Adrenal gland (tissue), 19 donors: ENCODE measurements at regions of chr10 and their contacts with region 1.

Region 1: DNA sequence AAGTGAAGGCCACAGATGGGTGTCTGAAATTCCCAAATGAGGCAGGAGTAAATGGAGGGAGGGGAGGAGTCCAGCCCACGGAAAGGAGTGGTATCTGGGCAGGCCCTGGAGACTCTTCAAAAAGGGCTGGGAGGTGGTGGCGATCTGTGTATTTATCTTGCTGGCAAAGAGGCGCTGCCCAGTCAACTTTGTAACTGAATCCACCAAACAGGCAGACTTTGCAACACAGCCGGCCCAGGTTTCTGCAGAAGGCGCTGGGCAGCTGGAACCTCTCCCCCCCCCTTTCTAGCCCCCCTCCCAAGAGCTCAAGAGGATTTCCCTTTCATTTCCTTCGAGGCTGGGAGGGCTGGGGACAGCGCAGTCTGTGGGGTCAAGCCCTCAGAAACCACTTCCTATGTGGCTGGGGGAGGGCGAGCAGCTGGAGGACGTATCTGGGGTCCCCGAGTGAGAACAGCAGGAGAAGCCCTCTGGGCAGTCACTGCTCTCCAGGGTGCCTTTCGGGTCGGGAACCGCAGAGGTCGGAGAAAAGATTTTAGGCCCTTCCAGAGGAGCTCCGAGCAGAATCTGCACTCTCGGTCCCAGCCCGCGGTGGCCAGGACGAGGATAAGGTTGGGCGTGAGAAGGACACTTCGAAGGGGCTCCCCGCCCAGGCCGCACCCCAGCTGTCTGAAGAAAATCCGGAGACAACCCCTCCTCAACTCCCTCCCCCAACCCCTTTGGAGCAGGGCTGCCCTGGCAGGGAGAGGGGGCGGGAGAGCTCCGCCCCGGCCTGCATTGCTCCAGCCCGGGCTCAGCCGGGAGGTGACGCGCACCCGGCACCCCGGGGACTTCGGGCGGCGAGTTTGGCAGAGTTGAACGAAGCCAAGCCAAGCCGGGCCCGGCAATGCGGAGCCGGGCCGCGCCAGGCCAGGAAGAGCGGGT is 965 bp downstream of the ZCCHC24 start:
- DNase-seq: peak; percentile 60 to 79 (median 72)
- H3K4me3 ChIP-seq: peak overlapping the region; percentile 22 to 84 (median 36)
- H3K27ac ChIP-seq: peak overlapping the region in 4 of 5 donors; percentile 68 to 97 (median 84)
- H3K4me1 ChIP-seq: peaks cover 0 to 26% of the 10 kb centered on the region in 2 donors
- H3K27me3 ChIP-seq: no peaks in the 10 kb centered on the region
- CTCF ChIP-seq: no peak
- POLR2A ChIP-seq: peak in 1 of 2 donors; percentile 15

Region 2: DNA sequence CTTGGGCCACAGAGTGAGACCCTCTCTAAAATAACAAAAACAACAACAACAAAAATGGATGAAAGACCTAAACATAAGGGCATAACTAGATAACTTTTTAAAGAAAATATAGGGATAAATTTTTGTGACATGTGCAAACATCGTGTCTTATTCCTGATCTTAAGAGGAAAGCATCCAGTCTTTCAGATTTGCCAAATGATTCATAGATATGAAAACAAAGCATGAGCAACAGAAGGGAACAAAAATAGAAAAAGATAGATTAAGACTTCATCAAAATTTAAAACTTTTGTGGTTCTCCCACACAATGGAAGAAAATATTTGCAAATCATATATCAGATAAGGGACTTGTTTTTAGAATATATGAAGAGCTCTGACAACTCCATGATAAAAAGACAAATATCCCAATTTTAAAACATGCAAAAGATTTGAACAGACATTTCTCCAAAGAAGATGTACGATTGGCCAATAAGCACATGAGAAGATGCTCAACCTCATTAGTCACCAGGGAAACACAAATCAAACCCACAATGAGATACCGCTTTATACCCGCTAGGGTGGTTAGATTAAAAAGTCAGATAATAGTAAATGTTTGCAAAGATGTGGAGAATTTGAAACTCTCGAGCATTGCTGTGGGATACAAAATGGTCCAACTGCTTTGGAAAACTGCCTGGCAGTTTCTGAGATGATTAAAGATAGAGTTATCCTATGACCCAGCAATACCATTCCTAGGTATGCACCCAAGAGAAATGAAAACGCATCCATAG is 76.9 kb before region 1 on chr10:
- intact Hi-C with region 1: no loop called
- DNase-seq: peak in 1 of 7 donors; percentile 0
- H3K4me3 ChIP-seq: no peak overlapping the region
- H3K27ac ChIP-seq: no peak overlapping the region
- H3K4me1 ChIP-seq: no peaks in the 10 kb centered on the region
- H3K27me3 ChIP-seq: no peaks in the 10 kb centered on the region
- CTCF ChIP-seq: no peak
- POLR2A ChIP-seq: no peak

Region 3: GRCh38 chr10:79400146-79401004 is 44.1 kb before region 1 on chr10:
- intact Hi-C with region 1: loop called in 1 of 2 experiments (anchors 5 kb)
- DNase-seq: peak in 3 of 7 donors; percentile 45 to 58 (median 58)
- H3K4me3 ChIP-seq: no peak overlapping the region
- H3K27ac ChIP-seq: peak overlapping the region in 2 of 5 donors; percentile 80 to 88
- H3K4me1 ChIP-seq: peaks cover 23 to 84% of the 10 kb centered on the region in 2 donors
- H3K27me3 ChIP-seq: no peaks in the 10 kb centered on the region
- CTCF ChIP-seq: peak; percentile 16 to 70 (median 58)
- POLR2A ChIP-seq: no peak